Activated B cell treated with CpG ODN at 0.5 μM for 24 hours (primary cell): ENCODE measurements at regions of chr4 and their contacts with region 1.

Region 1: DNA sequence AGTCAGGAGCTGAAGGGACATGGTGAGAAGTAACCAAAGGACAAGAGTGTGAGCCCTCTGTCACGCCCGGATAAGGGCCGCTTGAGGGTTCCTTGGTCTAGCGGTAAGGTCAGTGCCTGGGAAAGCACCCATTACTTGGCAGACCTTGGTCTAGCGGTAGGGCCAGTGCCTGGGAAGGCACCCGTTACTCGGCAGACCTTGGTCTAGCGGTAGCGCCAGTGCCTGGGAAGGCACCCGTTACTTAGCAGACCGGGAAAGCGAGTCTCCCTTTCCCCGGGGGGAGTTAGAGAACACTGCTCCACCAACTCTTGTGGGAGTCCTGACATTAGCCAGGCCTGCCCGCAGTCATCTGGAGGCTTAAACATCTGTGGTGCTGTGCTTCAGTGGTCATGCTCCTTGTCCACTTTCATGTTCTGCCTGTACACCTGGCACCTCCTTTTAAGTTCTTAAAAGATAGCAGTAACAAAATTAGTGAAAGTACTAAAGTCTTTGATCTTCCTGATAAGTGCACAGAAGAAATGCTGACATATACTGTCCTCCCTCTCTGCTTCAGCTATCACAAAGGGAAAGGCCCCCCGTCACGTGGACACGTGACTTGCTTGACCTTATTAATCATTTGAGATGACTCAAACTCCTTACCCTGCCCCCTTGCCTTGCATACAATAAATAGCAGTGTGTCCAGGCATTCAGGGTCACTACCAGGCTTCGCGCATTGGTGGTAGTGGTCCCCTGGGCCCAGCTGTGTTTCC is 9.3 kb upstream of the SEC24B start:
- DNase-seq: no peak
- ATAC-seq: no peak
- H3K4me3 Mint-ChIP-seq: no peak overlapping the region
- H3K27ac Mint-ChIP-seq: no peak overlapping the region
- H3K4me1 Mint-ChIP-seq: no peaks in the 10 kb centered on the region
- H3K27me3 Mint-ChIP-seq: no peaks in the 10 kb centered on the region
- CTCF ChIP-seq: no peak

Region 2: DNA sequence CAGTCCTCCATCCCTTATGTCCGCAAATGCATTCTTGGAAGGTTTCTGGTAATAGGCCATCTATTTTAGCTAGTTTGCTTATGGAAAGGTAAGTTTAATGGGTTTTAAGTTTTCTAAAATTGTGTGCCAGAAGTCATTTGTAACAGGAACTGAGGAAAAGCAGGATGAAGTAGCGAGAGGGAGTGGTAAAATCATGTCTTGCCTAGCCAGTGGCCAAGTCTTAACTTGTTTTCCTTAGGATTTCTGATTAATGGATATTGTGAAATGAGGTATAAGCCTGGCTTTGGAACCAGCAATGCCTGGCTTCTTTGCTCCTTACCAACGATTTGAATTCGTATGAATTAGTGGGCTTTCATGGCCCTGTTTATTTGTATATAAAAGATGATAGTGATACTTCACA is 16.7 kb after region 1 on chr4:
- CTCF ChIA-PET with region 1: no interaction called
- POLR2A ChIA-PET with region 1: no interaction called
- intact Hi-C with region 1: no loop called
- DNase-seq: no peak
- ATAC-seq: no peak
- H3K4me3 Mint-ChIP-seq: no peak overlapping the region
- H3K27ac Mint-ChIP-seq: no peak overlapping the region
- H3K4me1 Mint-ChIP-seq: peaks cover 76% of the 10 kb centered on the region
- H3K27me3 Mint-ChIP-seq: no peaks in the 10 kb centered on the region
- CTCF ChIP-seq: no peak

Region 3: DNA sequence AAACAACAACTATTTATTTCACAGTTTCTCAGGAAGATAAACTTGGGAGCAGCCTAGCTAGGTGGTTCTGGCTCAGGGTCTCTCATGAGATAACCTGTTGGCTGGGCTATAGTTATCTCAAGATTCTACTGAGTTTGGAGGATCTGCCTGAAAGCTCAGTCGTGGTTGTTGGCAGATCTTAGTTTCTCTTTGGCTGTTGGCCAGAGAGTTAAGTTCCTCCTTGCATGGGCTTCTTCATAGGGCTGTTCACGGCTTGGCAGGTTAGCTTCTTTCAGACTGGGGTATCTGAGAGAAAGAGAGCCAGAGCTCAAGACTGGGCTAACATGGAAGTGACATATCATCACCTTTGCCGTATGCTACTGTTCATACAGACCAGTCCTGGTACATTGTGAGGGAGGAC is 38.0 kb after region 1 on chr4:
- CTCF ChIA-PET with region 1: no interaction called
- POLR2A ChIA-PET with region 1: no interaction called
- intact Hi-C with region 1: no loop called
- DNase-seq: no peak
- ATAC-seq: no peak
- H3K4me3 Mint-ChIP-seq: no peak overlapping the region
- H3K27ac Mint-ChIP-seq: peak overlapping the region; percentile 46
- H3K4me1 Mint-ChIP-seq: peaks cover 24% of the 10 kb centered on the region
- H3K27me3 Mint-ChIP-seq: no peaks in the 10 kb centered on the region
- CTCF ChIP-seq: no peak

Region 4: DNA sequence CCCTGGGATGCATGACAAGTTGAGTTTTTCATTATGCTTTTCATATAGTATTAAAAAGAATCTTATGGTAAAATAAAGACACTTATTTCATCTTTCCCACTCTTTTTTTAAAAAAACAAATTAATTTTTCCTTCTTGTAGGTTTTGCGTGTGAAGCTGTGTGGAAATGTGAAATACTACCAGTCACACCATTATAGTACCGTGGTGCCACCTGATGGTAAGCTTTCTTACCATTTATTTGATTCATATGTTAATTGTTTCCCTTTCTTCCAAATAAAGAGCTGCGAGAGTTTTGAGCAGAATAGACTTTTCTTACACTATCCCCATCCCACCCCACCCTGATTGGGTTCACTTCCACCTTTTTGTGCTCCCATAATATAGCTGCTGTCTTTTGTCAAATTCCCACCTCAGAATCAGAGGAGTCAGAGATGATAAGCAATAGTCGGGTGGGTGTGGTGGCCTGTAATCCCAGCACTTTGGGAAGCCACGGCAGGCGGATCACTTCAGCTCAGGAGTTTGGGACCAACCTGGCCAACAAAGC is 234.7 kb after region 1 on chr4:
- CTCF ChIA-PET with region 1: no interaction called
- POLR2A ChIA-PET with region 1: no interaction called
- intact Hi-C with region 1: loop called (anchors 1 kb)
- DNase-seq: no peak
- ATAC-seq: no peak
- H3K4me3 Mint-ChIP-seq: no peak overlapping the region
- H3K27ac Mint-ChIP-seq: no peak overlapping the region
- H3K4me1 Mint-ChIP-seq: peaks cover 6% of the 10 kb centered on the region
- H3K27me3 Mint-ChIP-seq: no peaks in the 10 kb centered on the region
- CTCF ChIP-seq: no peak

Region 5: DNA sequence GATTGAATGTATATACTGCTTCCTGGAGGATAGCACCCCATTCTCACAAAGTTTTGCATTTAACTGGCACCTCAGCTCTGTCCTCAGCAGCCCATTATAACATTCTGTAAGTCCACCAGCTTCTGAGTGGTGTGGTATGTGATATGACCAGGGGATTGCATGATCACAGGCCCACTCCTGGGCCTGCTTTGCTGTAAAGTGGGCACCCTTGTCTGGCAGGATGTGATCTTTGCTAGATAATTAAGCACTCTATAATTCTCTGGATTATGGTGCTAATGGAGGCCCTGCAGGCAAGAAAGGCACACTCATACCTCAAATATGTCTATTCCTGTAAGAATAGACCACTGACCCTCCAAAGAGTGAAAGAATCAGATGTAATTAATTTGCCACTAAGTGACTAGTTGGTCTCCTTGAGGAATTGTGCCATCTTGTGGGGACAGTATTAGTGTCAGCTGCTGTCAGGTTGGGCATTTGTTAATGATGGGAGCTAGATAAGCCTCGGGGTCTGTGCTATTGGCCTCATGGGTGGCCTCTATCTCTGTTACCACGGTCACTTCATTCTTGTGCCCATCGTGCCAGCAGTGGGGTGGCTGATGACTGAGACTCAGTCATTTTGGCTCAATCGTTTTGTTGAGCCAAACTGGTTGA is 379.8 kb after region 1 on chr4:
- CTCF ChIA-PET with region 1: interaction called, 5 read pairs
- POLR2A ChIA-PET with region 1: no interaction called
- intact Hi-C with region 1: loop called (anchors 1 kb)
- DNase-seq: no peak
- ATAC-seq: no peak
- H3K4me3 Mint-ChIP-seq: no peak overlapping the region
- H3K27ac Mint-ChIP-seq: no peak overlapping the region
- H3K4me1 Mint-ChIP-seq: no peaks in the 10 kb centered on the region
- H3K27me3 Mint-ChIP-seq: peaks cover 4% of the 10 kb centered on the region
- CTCF ChIP-seq: no peak

Region 6: DNA sequence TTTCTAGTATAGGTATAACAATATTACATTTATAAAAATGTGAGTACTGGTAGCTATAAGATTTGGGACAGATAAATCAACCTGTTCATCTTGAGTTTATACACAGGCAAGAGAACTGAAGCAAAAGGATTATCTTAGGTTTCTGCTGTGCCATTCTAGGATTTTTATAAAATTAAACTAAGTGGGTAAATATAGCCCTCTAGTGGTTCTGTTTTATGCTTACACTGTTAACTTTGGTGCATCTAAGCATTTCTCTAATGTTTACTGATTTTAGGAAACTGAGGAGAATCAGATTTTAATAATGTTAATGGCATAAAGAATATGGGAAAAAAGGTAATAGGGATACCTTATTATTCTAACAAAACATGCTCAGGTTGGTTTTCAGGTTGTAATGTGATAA is 402.5 kb after region 1 on chr4:
- CTCF ChIA-PET with region 1: interaction called, 25 read pairs
- POLR2A ChIA-PET with region 1: no interaction called
- intact Hi-C with region 1: loop called (anchors 1 kb)
- DNase-seq: no peak
- ATAC-seq: peak; percentile 45
- H3K4me3 Mint-ChIP-seq: no peak overlapping the region
- H3K27ac Mint-ChIP-seq: no peak overlapping the region
- H3K4me1 Mint-ChIP-seq: no peaks in the 10 kb centered on the region
- H3K27me3 Mint-ChIP-seq: no peaks in the 10 kb centered on the region
- CTCF ChIP-seq: no peak

Region 7: GRCh38 chr4:109977854-109978501 is 553.7 kb after region 1 on chr4:
- CTCF ChIA-PET with region 1: interaction called, 16 read pairs
- POLR2A ChIA-PET with region 1: no interaction called
- intact Hi-C with region 1: loop called (anchors 1 kb)
- DNase-seq: no peak
- ATAC-seq: no peak
- H3K4me3 Mint-ChIP-seq: no peak overlapping the region
- H3K27ac Mint-ChIP-seq: no peak overlapping the region
- H3K4me1 Mint-ChIP-seq: no peaks in the 10 kb centered on the region
- H3K27me3 Mint-ChIP-seq: peaks cover 18% of the 10 kb centered on the region
- CTCF ChIP-seq: no peak

Region 8: GRCh38 chr4:109998867-109999584 is 574.8 kb after region 1 on chr4:
- CTCF ChIA-PET with region 1: no interaction called
- POLR2A ChIA-PET with region 1: no interaction called
- intact Hi-C with region 1: loop called (anchors 5 kb)
- DNase-seq: no peak
- ATAC-seq: peak; percentile 61
- H3K4me3 Mint-ChIP-seq: no peak overlapping the region
- H3K27ac Mint-ChIP-seq: no peak overlapping the region
- H3K4me1 Mint-ChIP-seq: peaks cover 9% of the 10 kb centered on the region
- H3K27me3 Mint-ChIP-seq: peaks cover 5% of the 10 kb centered on the region
- CTCF ChIP-seq: peak; percentile 66